Esophagus muscularis mucosa (tissue), 4 donors: ENCODE measurements at regions of chr14 and their contacts with region 1.

Region 1: DNA sequence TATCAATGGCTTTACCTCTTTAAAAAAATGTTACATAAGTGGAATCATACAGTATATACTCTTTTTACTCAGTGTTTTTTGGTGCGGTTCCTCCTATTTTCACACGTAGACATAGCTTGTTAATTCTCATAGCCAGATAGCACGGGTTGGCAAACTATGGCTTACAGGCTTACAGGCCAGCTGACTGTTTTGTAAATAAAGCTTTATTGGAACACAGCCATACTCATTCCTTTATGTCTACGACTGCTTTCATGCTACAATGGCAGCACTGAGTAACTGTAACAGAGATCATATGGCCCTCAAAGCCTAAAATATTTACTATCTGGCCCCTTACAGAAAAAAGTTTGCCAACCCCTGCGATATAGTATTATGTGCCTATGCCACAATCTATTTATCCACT is 5.8 kb upstream of the DAAM1 start:
- DNase-seq: no peak
- H3K4me3 ChIP-seq: no peak overlapping the region
- H3K27ac ChIP-seq: no peak overlapping the region
- H3K4me1 ChIP-seq: peaks cover 3 to 10% (median 8%) of the 10 kb centered on the region in 4 donors
- H3K27me3 ChIP-seq: no peaks in the 10 kb centered on the region
- CTCF ChIP-seq: no peak
- EP300 ChIP-seq: no peak
- POLR2A ChIP-seq: no peak

Region 2: GRCh38 chr14:59126710-59127432 is 55.8 kb before region 1 on chr14:
- intact Hi-C with region 1: loop called (anchors 5 kb)
- DNase-seq: no peak
- H3K4me3 ChIP-seq: no peak overlapping the region
- H3K27ac ChIP-seq: no peak overlapping the region
- H3K4me1 ChIP-seq: peaks cover 0 to 14% (median 11%) of the 10 kb centered on the region in 4 donors
- H3K27me3 ChIP-seq: no peaks in the 10 kb centered on the region
- CTCF ChIP-seq: peak; percentile 81 to 89 (median 83)
- EP300 ChIP-seq: no peak
- POLR2A ChIP-seq: no peak